ENCODE measurements at regions of chr9 and their contacts with region 1.

Region 1: GRCh38 chr9:6566409-6567139 is 79.0 kb downstream of the GLDC start:
- H3K4me3 ChIP-seq: no peak overlapping the region
- H3K27ac ChIP-seq: no peak overlapping the region
- H3K4me1 ChIP-seq: no peaks in the 10 kb centered on the region
- CTCF ChIP-seq: no peak

Region 2: DNA sequence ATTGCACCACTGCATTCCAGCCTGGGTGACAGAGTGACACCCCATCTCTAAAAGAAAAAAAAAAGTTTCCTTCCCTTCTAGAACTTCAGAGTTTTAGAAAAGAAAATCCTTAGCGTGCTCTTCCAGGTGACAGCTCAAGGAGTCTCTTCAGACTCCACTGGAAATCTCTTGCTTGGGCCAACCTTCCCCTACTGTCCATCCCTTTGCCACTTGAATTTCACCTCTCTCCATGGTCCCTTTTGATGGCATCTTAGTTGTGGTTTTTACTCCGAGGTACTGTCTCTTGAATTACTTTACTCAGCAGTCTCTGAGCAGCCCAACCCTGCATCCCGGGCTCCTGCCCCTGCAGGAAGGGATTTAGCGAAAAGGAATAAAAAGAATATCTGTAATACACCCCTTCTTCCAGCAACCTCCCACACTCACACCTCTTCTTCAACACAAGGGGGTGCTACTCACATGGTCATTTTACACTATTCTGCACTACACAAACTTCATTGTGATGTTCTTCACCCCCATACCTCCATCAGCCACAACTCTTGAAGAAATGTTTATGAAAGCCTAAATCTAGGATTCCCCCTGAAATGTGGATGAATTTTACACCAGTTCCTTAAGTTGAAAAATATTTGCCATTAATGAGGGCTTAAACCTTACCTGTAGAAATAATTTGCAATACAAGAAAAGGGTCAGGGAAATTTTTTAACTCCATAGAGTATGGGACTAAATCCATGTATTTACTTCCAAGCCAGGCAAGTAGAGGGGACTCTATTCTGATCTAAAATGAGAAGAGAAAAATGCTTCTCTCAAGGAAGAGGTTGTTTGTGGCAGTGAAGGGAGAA is 212.5 kb before region 1 on chr9:
- CTCF ChIA-PET with region 1: interaction called, 44 read pairs
- POLR2A ChIA-PET with region 1: no interaction called
- H3K4me3 ChIP-seq: no peak overlapping the region
- H3K27ac ChIP-seq: no peak overlapping the region
- H3K4me1 ChIP-seq: no peaks in the 10 kb centered on the region
- CTCF ChIP-seq: peak; percentile 68

Region 3: GRCh38 chr9:6584881-6585597 is 18.5 kb after region 1 on chr9:
- CTCF ChIA-PET with region 1: interaction called, 16 read pairs
- POLR2A ChIA-PET with region 1: no interaction called
- H3K4me3 ChIP-seq: no peak overlapping the region
- H3K27ac ChIP-seq: no peak overlapping the region
- H3K4me1 ChIP-seq: no peaks in the 10 kb centered on the region
- CTCF ChIP-seq: no peak

Region 4: GRCh38 chr9:6788162-6789016 is 221.8 kb after region 1 on chr9:
- CTCF ChIA-PET with region 1: no interaction called
- POLR2A ChIA-PET with region 1: no interaction called
- H3K4me3 ChIP-seq: no peak overlapping the region
- H3K27ac ChIP-seq: no peak overlapping the region
- H3K4me1 ChIP-seq: no peaks in the 10 kb centered on the region; the same call in 1 of the 2 replicates
- CTCF ChIP-seq: no peak

Region 5: GRCh38 chr9:6955251-6955921 is 388.8 kb after region 1 on chr9:
- CTCF ChIA-PET with region 1: no interaction called
- POLR2A ChIA-PET with region 1: no interaction called
- H3K4me3 ChIP-seq: no peak overlapping the region
- H3K27ac ChIP-seq: no peak overlapping the region
- H3K4me1 ChIP-seq: 0 out of 2 replicates have a peak, but pooled peaks cover 5% of the 10 kb centered on the region
- CTCF ChIP-seq: no peak

Measured in HEK293 (cell line).